Adrenal gland (tissue), 19 donors: ENCODE measurements at regions of chr19 and their contacts with region 1.

Region 1: GRCh38 chr19:15276636-15277215 is 44.5 kb upstream of the EPHX3 start:
- DNase-seq: peak in 4 of 7 donors; percentile 50 to 68 (median 62)
- H3K4me3 ChIP-seq: no peak overlapping the region
- H3K27ac ChIP-seq: peak overlapping the region in 4 of 5 donors; percentile 23 to 88 (median 62)
- H3K4me1 ChIP-seq: peaks cover 61 to 89% of the 10 kb centered on the region in 2 donors
- H3K27me3 ChIP-seq: no peaks in the 10 kb centered on the region
- CTCF ChIP-seq: no peak
- POLR2A ChIP-seq: no peak

Region 2: GRCh38 chr19:15323496-15324227 is 46.9 kb after region 1 on chr19:
- intact Hi-C with region 1: loop called in 1 of 2 experiments (anchors 5 kb)
- DNase-seq: peak; percentile 49 to 80 (median 75)
- H3K4me3 ChIP-seq: no peak overlapping the region
- H3K27ac ChIP-seq: peak overlapping the region; percentile 34 to 83 (median 75)
- H3K4me1 ChIP-seq: peaks cover 75 to 95% of the 10 kb centered on the region in 2 donors
- H3K27me3 ChIP-seq: no peaks in the 10 kb centered on the region
- CTCF ChIP-seq: no peak
- POLR2A ChIP-seq: peak in 1 of 2 donors; percentile 42

Region 3: GRCh38 chr19:15418588-15419412 is 142.1 kb after region 1 on chr19 and contains the start of gene AKAP8L:
- intact Hi-C with region 1: no loop called
- DNase-seq: peak; percentile 99 to 100 (median 100)
- H3K4me3 ChIP-seq: peak within 1 kb of the TSS; percentile 18 to 94 (median 86)
- H3K27ac ChIP-seq: peak within 1 kb of the TSS; percentile 70 to 98 (median 90)
- H3K4me1 ChIP-seq: peaks cover 26 to 40% of the 10 kb centered on the region in 2 donors
- H3K27me3 ChIP-seq: no peaks in the 10 kb centered on the region
- CTCF ChIP-seq: peak; percentile 24 to 75 (median 73)
- POLR2A ChIP-seq: peak; percentile 90 to 98
- total RNA-seq, gene AKAP8L: 48.3 to 206 (median 125) TPM